Left cardiac atrium (tissue), 4 donors: ENCODE measurements at regions of chr16 and their contacts with region 1.

Region 1: GRCh38 chr16:55944377-55944802 is 69.2 kb upstream of the CES5A start:
- DNase-seq: peak; percentile 79
- ATAC-seq: peak; percentile 94 to 98

Region 2: GRCh38 chr16:56115817-56116576 is 171.6 kb after region 1 on chr16:
- intact Hi-C with region 1: loop called in 1 of 2 experiments (anchors 10 kb)
- DNase-seq: no peak
- ATAC-seq: no peak

Region 3: DNA sequence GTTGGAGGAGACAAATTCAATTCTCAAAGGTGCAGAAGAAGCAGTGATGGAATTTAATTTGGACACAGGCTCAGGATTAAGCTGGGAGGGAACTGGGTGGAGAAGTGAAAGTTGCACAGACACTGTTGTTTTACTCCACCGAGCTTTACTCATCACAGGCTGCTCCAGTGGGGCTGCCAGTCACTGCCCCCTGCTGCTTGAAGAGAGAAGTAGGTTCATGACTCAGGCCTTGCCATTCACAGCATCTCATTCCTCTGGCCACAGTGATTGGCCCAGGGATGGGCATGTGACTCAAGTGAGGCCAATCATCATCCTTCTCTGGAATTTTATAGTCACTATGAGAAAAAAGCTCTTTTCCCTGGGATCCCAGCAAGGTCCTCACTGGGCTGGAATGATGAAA is 258.7 kb after region 1 on chr16:
- intact Hi-C with region 1: loop called (anchors 10 kb)
- DNase-seq: no peak
- ATAC-seq: peak; percentile 64 to 71